Astrocyte of the cerebellum (primary cell): ENCODE measurements at regions of chr5 and their contacts with region 1.

Region 1: GRCh38 chr5:7904170-7904569 is 35.2 kb downstream of the MTRR start:
- DNase-seq: peak; percentile 23
- H3K4me3 ChIP-seq: no peak overlapping the region
- CTCF ChIP-seq: no peak

Region 2: DNA sequence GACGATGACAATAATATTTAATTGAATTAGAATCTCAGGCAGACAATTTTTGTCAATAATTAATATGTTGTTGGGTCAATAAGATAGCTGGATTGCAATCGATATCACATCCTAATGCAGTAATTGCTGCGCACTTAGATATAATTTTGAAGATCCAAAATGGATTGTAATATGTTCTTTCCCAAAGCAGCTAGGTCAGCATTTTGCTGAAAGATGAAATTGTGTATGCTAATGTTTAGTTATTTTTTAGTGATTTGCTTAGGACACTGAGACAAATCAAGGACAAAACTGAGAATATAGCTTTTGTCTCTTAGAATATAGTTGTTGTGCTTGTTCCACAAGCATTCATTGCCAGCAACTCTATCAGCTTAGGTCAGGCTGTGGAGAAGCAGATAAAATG is 354.6 kb after region 1 on chr5:
- in situ Hi-C with region 1: no loop called
- DNase-seq: no peak
- H3K4me3 ChIP-seq: no peak overlapping the region
- CTCF ChIP-seq: no peak

Region 3: GRCh38 chr5:9207817-9208418 is 1303.7 kb after region 1 on chr5:
- in situ Hi-C with region 1: loop called (anchors 25 kb)
- DNase-seq: peak; percentile 54
- H3K4me3 ChIP-seq: no peak overlapping the region
- CTCF ChIP-seq: no peak